ENCODE measurements at regions of chr18 and their contacts with region 1.

Region 1: GRCh38 chr18:62324917-62325805 is at the start of gene TNFRSF11A:
- DNase-seq: peak in 1 of 2 experiments; percentile 89
- H3K4me3 ChIP-seq: peak within 1 kb of the TSS; percentile 60 to 94 (median 82)
- H3K27ac ChIP-seq: peak within 1 kb of the TSS; percentile 55; the same call in 1 of the 2 replicates
- H3K4me1 ChIP-seq: peaks cover 17 to 32% (median 19%) of the 10 kb centered on the region in 4 experiments
- H3K27me3 ChIP-seq: peaks cover 3 to 25% (median 14%) of the 10 kb centered on the region in 4 experiments
- CTCF ChIP-seq: peak; percentile 30 to 77 (median 57)
- EP300 ChIP-seq: no peak
- POLR2A ChIP-seq: peak; percentile 48 to 66
- RAD21 ChIP-seq: peak; percentile 44 to 52; a peak in 2 of 4 replicates
- total RNA-seq, gene TNFRSF11A: 10.6 and 11.1 TPM in 2 replicates

Region 2: GRCh38 chr18:62224229-62224628 is 100.9 kb before region 1 on chr18:
- CTCF ChIA-PET with region 1: no interaction called
- POLR2A ChIA-PET with region 1: no interaction called
- DNase-seq: no peak
- H3K4me3 ChIP-seq: no peak overlapping the region
- H3K27ac ChIP-seq: no peak overlapping the region
- H3K4me1 ChIP-seq: no peaks in the 10 kb centered on the region
- H3K27me3 ChIP-seq: no peaks in the 10 kb centered on the region
- CTCF ChIP-seq: no peak
- EP300 ChIP-seq: no peak
- POLR2A ChIP-seq: no peak
- RAD21 ChIP-seq: no peak

Region 3: GRCh38 chr18:62245699-62246098 is 79.5 kb before region 1 on chr18:
- CTCF ChIA-PET with region 1: no interaction called
- POLR2A ChIA-PET with region 1: no interaction called
- DNase-seq: no peak
- H3K4me3 ChIP-seq: no peak overlapping the region
- H3K27ac ChIP-seq: no peak overlapping the region
- H3K4me1 ChIP-seq: no peaks in the 10 kb centered on the region
- H3K27me3 ChIP-seq: no peaks in the 10 kb centered on the region
- CTCF ChIP-seq: peak in 1 of 3 experiments; percentile 21; a peak in 1 of 4 replicates
- EP300 ChIP-seq: no peak
- POLR2A ChIP-seq: no peak
- RAD21 ChIP-seq: no peak

Region 4: DNA sequence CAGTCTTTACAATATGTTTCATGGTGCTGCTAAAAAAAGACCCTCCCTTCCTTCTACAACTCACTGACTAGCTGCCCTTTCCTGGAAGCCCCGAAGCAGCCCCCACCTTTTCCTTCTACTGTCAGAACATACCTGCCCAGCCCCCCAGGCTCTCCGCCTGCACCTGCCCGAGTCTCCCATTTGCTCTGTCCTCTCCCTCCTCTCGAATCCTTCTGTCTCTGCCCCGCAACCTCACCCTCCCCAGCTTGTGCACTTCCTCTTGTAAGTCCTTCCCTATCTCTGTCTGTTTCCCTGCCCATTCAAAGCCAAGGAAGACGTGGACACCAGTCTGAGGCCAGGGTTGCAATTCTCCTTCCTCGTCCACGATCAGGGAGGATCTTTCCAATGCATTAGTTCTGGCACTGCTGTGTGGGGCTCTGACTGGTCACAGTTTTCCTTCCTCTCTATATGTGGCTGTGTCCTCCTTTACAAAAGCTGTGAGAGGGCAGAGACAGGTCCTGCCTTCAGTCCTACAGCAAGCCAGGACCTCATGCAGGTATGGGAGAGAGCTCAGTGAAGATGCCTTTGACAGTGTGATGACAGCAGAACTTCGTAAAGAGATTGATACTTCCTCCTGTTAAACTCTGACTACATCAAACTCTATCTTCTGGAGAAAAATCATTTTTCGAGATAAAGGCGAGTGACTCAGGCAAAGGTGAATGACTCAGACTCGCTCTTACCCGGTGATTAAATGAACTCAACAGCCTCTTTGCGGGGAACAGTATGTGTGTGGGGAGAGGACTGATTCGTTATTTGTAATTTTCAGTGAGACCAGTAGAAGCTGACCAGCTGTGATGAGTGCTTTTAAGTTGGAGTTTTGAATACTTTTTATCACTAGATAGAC is 14.2 kb after region 1 on chr18:
- CTCF ChIA-PET with region 1: interaction called, 14 read pairs
- POLR2A ChIA-PET with region 1: interaction called, 13 read pairs
- DNase-seq: peak in 1 of 2 experiments; percentile 53
- H3K4me3 ChIP-seq: peak overlapping the region in 3 of 4 experiments; percentile 10 to 48 (median 27); a peak in 6 of 8 replicates
- H3K27ac ChIP-seq: no peak overlapping the region
- H3K4me1 ChIP-seq: peaks cover 3 to 19% (median 14%) of the 10 kb centered on the region in 4 experiments
- H3K27me3 ChIP-seq: no peaks in the 10 kb centered on the region
- CTCF ChIP-seq: no peak
- EP300 ChIP-seq: no peak
- POLR2A ChIP-seq: no peak
- RAD21 ChIP-seq: no peak

Region 5: GRCh38 chr18:62357079-62357719 is 32.0 kb after region 1 on chr18:
- CTCF ChIA-PET with region 1: interaction called, 16 read pairs
- POLR2A ChIA-PET with region 1: interaction called, 3 read pairs
- DNase-seq: no peak
- H3K4me3 ChIP-seq: no peak overlapping the region
- H3K27ac ChIP-seq: no peak overlapping the region
- H3K4me1 ChIP-seq: peaks cover 0 to 4% (median 0%) of the 10 kb centered on the region in 4 experiments; a peak in 3 of 7 replicates
- H3K27me3 ChIP-seq: no peaks in the 10 kb centered on the region
- CTCF ChIP-seq: no peak
- EP300 ChIP-seq: no peak
- POLR2A ChIP-seq: no peak
- RAD21 ChIP-seq: no peak